AG04450 (cell line): ENCODE measurements at regions of chr6 and their contacts with region 1.

Region 1: DNA sequence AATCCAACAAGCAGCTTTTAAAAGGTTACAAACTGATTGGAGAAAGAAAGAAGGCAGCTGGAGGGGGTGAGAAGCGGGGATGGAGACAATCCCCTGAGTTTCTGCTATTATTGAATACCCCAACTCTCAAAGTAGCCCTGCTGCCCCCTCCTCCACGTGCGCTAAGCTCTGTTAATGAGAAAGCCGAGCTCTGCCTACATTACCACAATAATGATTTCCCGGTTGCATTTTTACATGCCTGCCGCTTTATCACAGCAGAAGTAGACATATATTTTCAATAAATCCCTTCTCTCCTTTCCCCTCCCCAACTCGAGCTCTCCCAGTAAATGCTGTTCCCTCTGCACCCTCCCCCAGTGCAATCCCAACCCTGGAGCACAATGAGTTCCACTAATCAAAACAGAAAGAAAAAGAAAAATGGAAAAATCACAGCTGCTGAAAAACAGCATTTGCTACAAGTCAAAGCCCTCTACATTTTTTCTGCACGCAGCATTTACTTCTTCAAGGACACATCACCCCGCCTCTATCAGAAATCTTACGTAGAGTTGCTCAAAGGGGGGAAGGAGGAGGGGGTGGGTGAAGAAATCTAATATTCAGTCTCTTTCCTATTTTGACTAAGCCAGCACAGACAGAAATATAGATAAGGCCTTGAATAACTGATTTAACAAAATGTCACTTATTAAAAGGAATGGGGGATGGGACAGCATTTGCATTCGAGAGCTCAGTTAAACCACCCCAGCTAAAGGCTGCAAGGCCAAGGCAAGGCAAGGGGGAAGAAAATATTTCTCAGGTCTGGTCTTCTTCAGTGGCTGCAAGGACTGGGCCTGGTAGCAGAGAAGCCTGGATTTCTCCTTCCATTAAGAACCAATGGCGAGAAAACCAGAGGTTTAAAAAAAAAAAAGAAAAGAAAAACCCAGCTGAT is 10.7 kb downstream of the TRERF1 start:
- DNase-seq: peak; percentile 57
- H3K4me3 ChIP-seq: peak overlapping the region; percentile 27
- H3K27ac ChIP-seq: peak overlapping the region; percentile 63
- H3K27me3 ChIP-seq: no peaks in the 10 kb centered on the region
- CTCF ChIP-seq: no peak

Region 2: GRCh38 chr6:42104095-42104806 is 336.8 kb before region 1 on chr6:
- CTCF ChIA-PET with region 1: no interaction called
- POLR2A ChIA-PET with region 1: no interaction called
- DNase-seq: no peak
- H3K4me3 ChIP-seq: 0 out of 2 replicates have a peak overlapping the region, but pooled peaks have one; percentile 25
- H3K27ac ChIP-seq: no peak overlapping the region
- H3K27me3 ChIP-seq: no peaks in the 10 kb centered on the region
- CTCF ChIP-seq: peak; percentile 66

Region 3: GRCh38 chr6:42402184-42402583 is 38.9 kb before region 1 on chr6:
- CTCF ChIA-PET with region 1: interaction called, 4 read pairs
- POLR2A ChIA-PET with region 1: interaction called, 12 read pairs
- DNase-seq: no peak
- H3K4me3 ChIP-seq: no peak overlapping the region
- H3K27ac ChIP-seq: no peak overlapping the region
- H3K27me3 ChIP-seq: no peaks in the 10 kb centered on the region
- CTCF ChIP-seq: no peak

Region 4: DNA sequence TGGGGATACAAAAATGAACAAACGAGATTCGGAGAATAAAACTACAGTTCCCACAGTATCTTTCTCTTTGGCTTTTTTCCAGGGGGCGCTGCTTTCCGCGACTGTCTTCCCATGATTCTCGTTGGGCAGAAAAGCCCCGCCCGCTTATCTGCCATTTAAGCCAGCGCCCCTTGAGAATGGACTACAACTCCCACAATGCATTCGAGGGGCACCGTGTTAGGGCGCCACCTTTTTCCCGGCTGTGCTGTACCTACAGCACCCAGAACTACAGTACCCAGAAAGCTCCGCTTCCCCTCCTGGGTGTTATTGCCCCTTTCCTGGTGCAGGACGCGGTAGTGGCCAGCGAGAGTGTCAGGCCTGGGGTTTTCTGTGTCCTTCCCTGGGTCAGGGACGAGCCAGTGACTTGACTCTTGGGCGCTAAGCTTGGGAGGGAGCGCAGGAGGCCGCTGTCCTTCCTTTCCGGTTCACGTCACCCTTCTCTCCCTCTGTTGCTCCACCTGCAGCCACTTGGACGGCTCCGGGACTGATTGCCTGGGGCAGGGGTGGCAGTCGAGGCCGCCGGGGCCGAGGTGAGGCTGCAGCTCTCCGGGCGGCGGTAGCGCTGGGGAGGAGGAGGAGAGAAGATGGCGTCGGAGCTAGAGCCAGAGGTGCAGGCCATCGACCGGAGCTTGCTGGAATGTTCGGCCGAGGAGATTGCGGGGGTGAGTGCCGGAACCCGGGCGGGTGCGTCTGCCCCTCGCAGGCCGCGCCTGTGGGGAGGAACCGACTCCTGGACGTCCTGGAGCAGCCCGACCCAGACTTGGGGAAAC is 122.9 kb after region 1 on chr6 and contains the start of gene UBR2:
- CTCF ChIA-PET with region 1: no interaction called
- POLR2A ChIA-PET with region 1: no interaction called
- DNase-seq: peak; percentile 95
- H3K4me3 ChIP-seq: peak within 1 kb of the TSS; percentile 96
- H3K27ac ChIP-seq: peak within 1 kb of the TSS; percentile 93
- H3K27me3 ChIP-seq: peaks cover 3% of the 10 kb centered on the region
- CTCF ChIP-seq: no peak; the same call in none of the 2 replicates
- polyA plus RNA-seq, gene UBR2: 18.5 and 25.3 TPM in 2 replicates